SK-N-SH (cell line): ENCODE measurements at regions of chr6 and their contacts with region 1.

Region 1: DNA sequence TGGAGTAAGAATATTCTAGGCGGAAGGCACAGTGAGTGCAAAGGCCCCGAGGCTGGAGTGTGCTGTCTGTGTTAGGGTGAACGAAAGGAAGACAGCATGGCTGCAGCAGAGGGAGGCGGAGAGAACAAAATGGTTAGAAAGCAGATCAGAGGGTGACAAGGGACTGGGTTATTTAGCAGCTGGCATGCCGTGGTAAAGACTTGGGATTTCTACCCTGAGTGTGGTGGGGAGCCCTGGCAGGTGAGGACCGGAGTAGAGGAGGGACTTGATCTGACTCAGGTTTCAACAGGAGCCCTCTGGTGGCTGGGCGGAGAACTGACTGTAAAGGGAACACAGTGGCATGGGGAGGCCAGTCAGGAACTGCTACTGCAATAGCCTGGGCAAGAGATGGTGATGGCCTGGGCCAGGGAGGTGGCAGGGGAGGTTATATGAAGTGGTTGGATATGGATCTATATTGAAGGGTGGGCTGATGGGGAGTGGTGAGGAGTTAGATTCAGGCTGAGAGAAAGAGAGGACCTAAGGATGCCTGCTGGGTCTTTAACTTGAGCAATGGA is 38.0 kb downstream of the PIM1 start:
- DNase-seq: peak; percentile 61
- H3K4me3 ChIP-seq: no peak overlapping the region
- H3K27ac ChIP-seq: no peak overlapping the region
- H3K4me1 ChIP-seq: peaks cover 0 to 2% of the 10 kb centered on the region in 2 experiments; a peak in 1 of 4 replicates
- H3K27me3 ChIP-seq: no peaks in the 10 kb centered on the region
- CTCF ChIP-seq: peak; percentile 77
- EP300 ChIP-seq: no peak
- RAD21 ChIP-seq: peak; percentile 58

Region 2: DNA sequence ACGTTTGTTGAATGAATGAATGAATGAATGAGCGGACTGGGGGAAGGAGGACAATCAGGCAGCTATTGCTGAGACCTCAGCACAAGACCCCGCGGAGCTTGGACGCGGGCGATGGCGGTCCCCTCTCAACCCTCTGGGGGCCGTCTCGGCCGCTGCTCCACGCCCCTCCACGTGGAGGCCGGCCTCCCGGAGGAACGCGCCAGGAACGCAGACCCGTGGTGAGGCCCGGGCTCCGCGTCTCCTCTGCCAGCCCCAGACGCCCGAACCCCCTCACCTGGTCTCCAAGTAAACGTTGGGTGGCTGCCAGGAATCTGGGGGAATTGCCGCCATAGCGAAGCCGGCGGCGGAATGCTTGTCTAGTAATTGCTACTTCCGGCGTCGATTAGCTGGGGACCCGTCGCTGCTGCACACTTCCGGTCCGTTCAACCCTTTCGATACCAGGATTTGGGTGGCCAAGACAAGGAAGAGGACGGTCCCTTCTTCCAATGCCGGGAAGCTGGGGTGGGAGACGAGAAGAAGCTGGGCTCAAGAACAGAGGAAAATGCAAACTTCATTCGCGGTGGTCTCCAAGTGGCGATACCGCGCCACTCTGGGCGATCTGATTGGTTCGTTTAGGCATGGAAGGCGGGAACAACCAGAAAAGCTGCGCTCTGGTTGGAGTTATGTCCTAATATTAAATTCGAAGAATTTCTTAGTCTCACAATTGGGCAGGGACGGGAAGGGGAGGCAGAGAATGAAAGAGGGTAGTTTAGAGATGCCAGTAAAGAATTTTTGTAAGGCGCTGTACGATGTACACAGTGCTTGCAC is 333.3 kb before region 1 on chr6 and contains the start of gene PPIL1:
- CTCF ChIA-PET with region 1: interaction called, 11 read pairs
- POLR2A ChIA-PET with region 1: no interaction called
- DNase-seq: peak; percentile 94
- H3K4me3 ChIP-seq: peak within 1 kb of the TSS; percentile 76 to 87
- H3K27ac ChIP-seq: peak within 1 kb of the TSS; percentile 95 to 100
- H3K4me1 ChIP-seq: peaks cover 0 to 10% of the 10 kb centered on the region in 2 experiments; a peak in 2 of 4 replicates
- H3K27me3 ChIP-seq: no peaks in the 10 kb centered on the region
- CTCF ChIP-seq: no peak
- EP300 ChIP-seq: peak in 1 of 2 experiments; percentile 6; a peak in 2 of 4 replicates
- RAD21 ChIP-seq: no peak
- polyA plus RNA-seq, gene PPIL1: 36.6 and 48.4 TPM in 2 replicates

Region 3: DNA sequence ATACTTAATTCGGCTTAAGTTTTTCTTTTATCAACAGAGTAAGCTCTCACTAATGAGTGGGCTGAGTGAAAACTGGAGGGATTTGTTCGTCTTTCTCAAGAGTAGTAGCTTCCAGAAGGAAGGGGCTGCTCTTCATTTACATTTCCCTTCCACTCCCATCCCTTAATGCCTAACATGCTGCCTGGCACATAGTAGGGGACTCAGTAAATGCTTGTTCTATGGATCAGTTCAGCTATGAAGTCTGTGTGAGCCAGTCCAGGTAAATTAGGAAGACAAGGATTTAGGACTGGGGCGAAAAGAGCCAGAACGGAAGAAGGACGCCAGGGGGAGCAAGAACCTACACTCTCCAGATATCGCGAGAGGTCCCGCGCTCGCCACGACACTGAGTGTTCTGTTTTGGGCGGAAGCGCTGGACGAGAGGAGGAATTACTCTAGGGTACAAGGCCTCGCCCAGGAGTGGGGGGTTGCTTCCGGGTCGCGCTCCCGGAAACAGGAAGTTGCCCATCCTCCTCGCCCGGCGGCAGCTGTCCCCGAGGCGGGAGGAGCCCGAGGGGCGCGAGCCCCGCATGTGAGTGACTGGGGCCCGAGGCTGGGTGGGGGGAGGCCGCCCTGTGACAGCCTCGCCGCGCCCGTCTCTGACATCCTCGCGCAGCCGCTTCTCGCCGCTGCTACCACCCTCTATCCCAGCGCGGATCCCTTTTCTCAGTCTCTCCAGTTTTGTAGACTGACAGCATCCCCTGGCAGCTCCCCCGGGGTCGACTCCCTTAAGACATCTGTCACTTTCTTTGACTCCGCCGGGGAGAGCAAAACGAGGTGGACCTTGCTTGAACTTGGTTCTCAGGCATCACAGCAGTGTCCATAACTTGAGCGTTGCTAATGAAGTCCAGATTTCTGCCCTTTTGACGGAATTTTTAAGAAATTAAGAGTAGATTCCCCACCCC is 322.2 kb before region 1 on chr6 and contains the start of gene C6orf89:
- CTCF ChIA-PET with region 1: interaction called, 16 read pairs
- POLR2A ChIA-PET with region 1: no interaction called
- DNase-seq: peak; percentile 94
- H3K4me3 ChIP-seq: peak within 1 kb of the TSS; percentile 90 to 96
- H3K27ac ChIP-seq: peak within 1 kb of the TSS; percentile 73 to 84
- H3K4me1 ChIP-seq: peaks cover 0 to 5% of the 10 kb centered on the region in 2 experiments; a peak in 1 of 4 replicates
- H3K27me3 ChIP-seq: no peaks in the 10 kb centered on the region
- CTCF ChIP-seq: peak; percentile 79
- EP300 ChIP-seq: peak in 1 of 2 experiments; percentile 36; a peak in 1 of 4 replicates
- RAD21 ChIP-seq: peak; percentile 58
- polyA plus RNA-seq, gene C6orf89: 20.4 and 29.8 TPM in 2 replicates

Region 4: GRCh38 chr6:37011656-37012378 is 196.2 kb before region 1 on chr6:
- CTCF ChIA-PET with region 1: interaction called, 431 read pairs
- POLR2A ChIA-PET with region 1: no interaction called
- DNase-seq: no peak
- H3K4me3 ChIP-seq: no peak overlapping the region
- H3K27ac ChIP-seq: no peak overlapping the region
- H3K4me1 ChIP-seq: no peaks in the 10 kb centered on the region
- H3K27me3 ChIP-seq: no peaks in the 10 kb centered on the region
- CTCF ChIP-seq: no peak
- EP300 ChIP-seq: no peak
- RAD21 ChIP-seq: no peak

Region 5: GRCh38 chr6:37177077-37177934 is 30.7 kb before region 1 on chr6:
- CTCF ChIA-PET with region 1: interaction called, 68 read pairs
- POLR2A ChIA-PET with region 1: no interaction called
- DNase-seq: no peak
- H3K4me3 ChIP-seq: no peak overlapping the region
- H3K27ac ChIP-seq: no peak overlapping the region
- H3K4me1 ChIP-seq: peaks cover 3 to 8% of the 10 kb centered on the region in 2 experiments; a peak in 2 of 4 replicates
- H3K27me3 ChIP-seq: no peaks in the 10 kb centered on the region
- CTCF ChIP-seq: no peak
- EP300 ChIP-seq: no peak
- RAD21 ChIP-seq: no peak

Region 6: GRCh38 chr6:37190159-37190535 is 17.8 kb before region 1 on chr6:
- CTCF ChIA-PET with region 1: interaction called, 24 read pairs
- POLR2A ChIA-PET with region 1: no interaction called
- DNase-seq: no peak
- H3K4me3 ChIP-seq: no peak overlapping the region
- H3K27ac ChIP-seq: no peak overlapping the region
- H3K4me1 ChIP-seq: peaks cover 0 to 5% of the 10 kb centered on the region in 2 experiments; a peak in 1 of 4 replicates
- H3K27me3 ChIP-seq: no peaks in the 10 kb centered on the region
- CTCF ChIP-seq: no peak
- EP300 ChIP-seq: no peak
- RAD21 ChIP-seq: no peak

Region 7: DNA sequence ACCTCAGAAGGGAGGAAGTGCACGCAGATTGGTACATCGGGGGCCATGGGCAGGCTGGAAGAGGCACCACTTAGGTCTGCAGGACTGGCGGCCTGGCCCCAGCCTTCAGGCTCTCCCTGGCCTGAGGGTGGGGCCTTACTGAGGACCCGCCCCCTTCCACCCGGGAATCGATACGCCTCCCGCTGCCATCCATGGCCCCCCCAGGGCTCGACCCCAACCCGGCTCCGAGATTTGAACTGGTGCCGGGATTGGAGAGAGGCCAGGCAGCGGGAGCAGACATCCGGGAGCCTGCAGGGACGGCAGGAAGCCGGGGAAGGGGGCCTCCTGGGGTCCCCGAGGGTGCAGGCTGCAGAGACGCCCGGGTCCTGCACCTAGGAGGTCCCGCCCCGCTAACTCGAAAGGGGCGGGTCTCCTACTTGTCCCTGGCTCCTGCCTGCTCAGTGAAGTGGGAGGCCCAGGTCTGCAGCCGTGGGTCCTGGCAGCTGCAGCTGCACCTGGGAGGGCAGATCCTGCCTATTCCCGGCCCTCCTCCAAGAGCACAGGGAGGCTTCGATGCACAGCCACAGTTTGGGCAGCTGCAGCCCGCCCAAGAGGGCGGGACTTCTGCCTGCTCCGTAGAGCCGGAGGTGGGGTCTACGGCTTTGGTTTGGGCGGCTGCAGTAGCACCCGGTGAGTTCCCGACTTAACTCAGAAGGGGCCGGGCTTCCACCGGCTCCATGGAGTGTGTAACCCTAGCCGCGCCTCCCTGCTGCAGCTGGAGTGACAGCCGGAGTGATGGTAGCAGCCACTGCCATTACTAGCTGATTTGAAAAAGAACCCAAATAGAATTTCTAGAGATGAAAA is 14.4 kb after region 1 on chr6:
- CTCF ChIA-PET with region 1: interaction called, 17 read pairs
- POLR2A ChIA-PET with region 1: no interaction called
- DNase-seq: peak; percentile 90
- H3K4me3 ChIP-seq: peak overlapping the region; percentile 62 to 65
- H3K27ac ChIP-seq: peak overlapping the region; percentile 37 to 93; a peak in 3 of 4 replicates
- H3K4me1 ChIP-seq: peaks cover 6% of the 10 kb centered on the region in 2 experiments; a peak in 2 of 4 replicates
- H3K27me3 ChIP-seq: no peaks in the 10 kb centered on the region
- CTCF ChIP-seq: no peak
- EP300 ChIP-seq: no peak
- RAD21 ChIP-seq: no peak